H1 (cell line): ENCODE measurements at regions of chr19 and their contacts with region 1.

Region 1: GRCh38 chr19:14405758-14406644 is 13.1 kb downstream of the DDX39A start:
- DNase-seq: peak; percentile 97 to 99
- H3K4me3 ChIP-seq: peak overlapping the region; percentile 13 to 48 (median 22); a peak in 4 of 8 replicates
- H3K27ac ChIP-seq: peak overlapping the region; percentile 44
- H3K4me1 ChIP-seq: peaks cover 0 to 13% (median 5%) of the 10 kb centered on the region in 4 experiments; a peak in 5 of 7 replicates
- H3K27me3 ChIP-seq: no peaks in the 10 kb centered on the region
- CTCF ChIP-seq: peak; percentile 81 to 97 (median 97)
- EP300 ChIP-seq: no peak
- POLR2A ChIP-seq: peak in 1 of 2 experiments; percentile 65; a peak in 1 of 3 replicates
- RAD21 ChIP-seq: peak; percentile 90 to 96

Region 2: DNA sequence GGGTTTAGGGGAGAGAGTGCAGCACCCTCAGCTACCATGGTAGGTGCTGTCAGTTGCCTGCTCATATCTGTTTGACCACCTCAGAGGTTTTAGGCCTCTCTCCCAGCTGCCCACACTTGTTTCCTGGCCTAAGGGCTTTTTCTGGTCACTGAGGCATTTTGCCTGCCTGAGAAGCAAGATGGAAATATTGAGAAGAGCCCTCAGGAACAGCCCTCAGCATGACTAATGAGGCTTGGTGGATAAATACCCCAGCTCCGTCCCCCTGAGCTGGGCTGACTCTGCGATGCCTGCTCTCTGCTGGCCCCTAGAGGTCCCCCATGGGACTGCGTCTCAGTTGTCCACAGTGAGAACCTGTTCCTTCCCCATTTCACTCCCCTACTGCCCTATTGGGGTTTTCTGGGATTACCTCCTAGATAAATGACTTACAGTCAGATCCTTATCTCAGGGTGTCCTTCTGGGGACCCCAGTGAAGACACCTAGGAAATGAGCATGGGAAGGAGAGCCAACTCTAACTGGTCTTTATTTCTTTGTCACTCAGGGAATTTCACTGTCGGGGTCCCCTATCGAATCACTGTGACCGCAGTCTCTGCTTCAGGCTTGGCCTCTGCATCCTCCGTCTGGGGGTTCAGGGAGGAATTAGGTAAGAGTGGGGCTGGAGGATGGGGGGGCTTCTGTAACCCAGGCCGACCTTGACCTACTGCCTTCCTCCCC is 357.4 kb before region 1 on chr19:
- CTCF ChIA-PET with region 1: no interaction called
- POLR2A ChIA-PET with region 1: no interaction called
- DNase-seq: peak; percentile 56 to 97
- H3K4me3 ChIP-seq: no peak overlapping the region
- H3K27ac ChIP-seq: no peak overlapping the region
- H3K4me1 ChIP-seq: no peaks in the 10 kb centered on the region; a peak in 1 of 7 replicates
- H3K27me3 ChIP-seq: no peaks in the 10 kb centered on the region
- CTCF ChIP-seq: peak; percentile 95 to 97 (median 96)
- EP300 ChIP-seq: no peak
- POLR2A ChIP-seq: no peak
- RAD21 ChIP-seq: peak; percentile 66 to 75

Region 3: GRCh38 chr19:14136509-14137281 is 269.3 kb before region 1 on chr19 and contains the start of gene ASF1B:
- CTCF ChIA-PET with region 1: interaction called, 9 read pairs
- POLR2A ChIA-PET with region 1: interaction called, 17 read pairs
- DNase-seq: peak; percentile 96 to 97
- H3K4me3 ChIP-seq: peak within 1 kb of the TSS; percentile 75 to 86 (median 80)
- H3K27ac ChIP-seq: peak within 1 kb of the TSS; percentile 78
- H3K4me1 ChIP-seq: peaks cover 2 to 11% (median 5%) of the 10 kb centered on the region in 4 experiments
- H3K27me3 ChIP-seq: no peaks in the 10 kb centered on the region
- CTCF ChIP-seq: peak; percentile 37 to 63 (median 55)
- EP300 ChIP-seq: no peak
- POLR2A ChIP-seq: peak; percentile 71 to 93
- RAD21 ChIP-seq: peak; percentile 70 to 75
- total RNA-seq, gene ASF1B: 32.1 and 32.6 TPM in 2 replicates

Region 4: DNA sequence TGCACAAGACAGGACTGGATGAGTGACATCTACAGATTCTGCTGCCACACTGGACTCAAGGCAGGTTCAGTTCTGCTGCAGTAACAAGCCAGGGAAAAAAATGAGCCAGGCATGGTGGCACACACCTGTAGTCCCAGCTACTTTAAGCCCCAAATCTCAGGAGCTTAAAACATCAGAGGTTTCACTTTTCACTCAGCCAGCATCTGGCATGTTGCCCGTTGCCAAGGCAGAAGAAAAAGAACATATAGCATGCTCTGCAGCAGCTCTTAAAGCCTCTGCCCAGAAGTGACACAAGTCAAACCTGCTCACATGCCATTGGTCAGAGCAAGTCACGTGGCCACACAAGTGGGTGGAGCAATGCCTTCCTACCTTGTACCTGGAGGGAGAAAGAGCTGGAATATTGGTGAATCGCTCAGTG is 39.5 kb before region 1 on chr19:
- CTCF ChIA-PET with region 1: interaction called, 114 read pairs
- POLR2A ChIA-PET with region 1: interaction called, 33 read pairs
- DNase-seq: peak; percentile 46 to 93
- H3K4me3 ChIP-seq: no peak overlapping the region
- H3K27ac ChIP-seq: no peak overlapping the region
- H3K4me1 ChIP-seq: peaks cover 0 to 8% (median 2%) of the 10 kb centered on the region in 4 experiments; a peak in 3 of 7 replicates
- H3K27me3 ChIP-seq: no peaks in the 10 kb centered on the region
- CTCF ChIP-seq: no peak
- EP300 ChIP-seq: no peak
- POLR2A ChIP-seq: no peak
- RAD21 ChIP-seq: no peak

Region 5: DNA sequence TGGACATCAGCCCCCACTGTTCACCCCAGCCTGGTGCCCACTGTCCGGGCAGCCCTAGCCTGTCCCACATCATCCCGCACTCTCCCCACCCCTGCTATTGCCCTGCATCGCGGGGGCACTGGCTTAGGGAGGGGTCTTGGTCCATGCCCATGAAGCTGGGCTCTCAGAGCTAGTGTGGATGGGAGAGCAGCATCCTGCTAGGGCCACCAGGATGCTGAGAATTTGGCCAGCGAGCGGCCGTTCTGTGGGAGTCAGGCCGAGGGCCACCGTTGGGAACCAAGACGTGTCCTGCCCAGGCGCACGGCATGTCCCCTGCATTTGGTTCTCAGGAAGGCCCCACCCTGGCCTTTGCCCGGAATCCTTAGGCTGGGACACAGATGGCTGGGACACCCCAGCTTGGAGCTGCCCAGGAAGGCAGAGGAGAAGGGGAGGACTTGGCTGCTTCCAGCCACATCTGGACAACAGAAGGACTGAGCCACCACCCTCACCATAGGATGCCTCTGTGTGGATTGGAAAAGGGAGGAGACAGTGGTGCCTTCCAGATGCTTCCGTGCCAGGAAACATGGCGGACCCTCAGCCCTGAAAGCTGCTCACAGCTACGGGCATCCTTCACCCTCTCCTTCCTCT is 10.2 kb before region 1 on chr19:
- CTCF ChIA-PET with region 1: interaction called, 20 read pairs
- POLR2A ChIA-PET with region 1: interaction called, 24 read pairs
- DNase-seq: no peak
- H3K4me3 ChIP-seq: no peak overlapping the region
- H3K27ac ChIP-seq: no peak overlapping the region
- H3K4me1 ChIP-seq: peaks cover 0 to 5% (median 4%) of the 10 kb centered on the region in 4 experiments; a peak in 5 of 7 replicates
- H3K27me3 ChIP-seq: no peaks in the 10 kb centered on the region
- CTCF ChIP-seq: no peak
- EP300 ChIP-seq: no peak
- POLR2A ChIP-seq: no peak
- RAD21 ChIP-seq: no peak

Region 6: GRCh38 chr19:14432791-14433553 is 27.0 kb after region 1 on chr19 and contains the start of gene PKN1:
- CTCF ChIA-PET with region 1: interaction called, 14 read pairs
- POLR2A ChIA-PET with region 1: interaction called, 6 read pairs
- DNase-seq: peak in 1 of 2 experiments; percentile 86
- H3K4me3 ChIP-seq: peak within 1 kb of the TSS; percentile 54 to 96 (median 68)
- H3K27ac ChIP-seq: no peak within 1 kb of the TSS
- H3K4me1 ChIP-seq: peaks cover 0 to 11% (median 3%) of the 10 kb centered on the region in 4 experiments; a peak in 5 of 7 replicates
- H3K27me3 ChIP-seq: no peaks in the 10 kb centered on the region; a peak in 1 of 7 replicates
- CTCF ChIP-seq: no peak
- EP300 ChIP-seq: 0 out of 3 replicates have a peak, but pooled peaks of 1 of the 2 experiments have one; percentile 23
- POLR2A ChIP-seq: peak in 1 of 2 experiments; percentile 30; a peak in 1 of 3 replicates
- RAD21 ChIP-seq: no peak
- total RNA-seq, gene PKN1: 161 and 162 TPM in 2 replicates

Region 7: GRCh38 chr19:14595516-14595915 is 189.5 kb after region 1 on chr19:
- CTCF ChIA-PET with region 1: no interaction called
- POLR2A ChIA-PET with region 1: no interaction called
- DNase-seq: no peak
- H3K4me3 ChIP-seq: no peak overlapping the region
- H3K27ac ChIP-seq: no peak overlapping the region
- H3K4me1 ChIP-seq: no peaks in the 10 kb centered on the region
- H3K27me3 ChIP-seq: no peaks in the 10 kb centered on the region
- CTCF ChIP-seq: no peak
- EP300 ChIP-seq: no peak
- POLR2A ChIP-seq: no peak
- RAD21 ChIP-seq: no peak